ENCODE measurements at regions of chr7 and their contacts with region 1.

Region 1: DNA sequence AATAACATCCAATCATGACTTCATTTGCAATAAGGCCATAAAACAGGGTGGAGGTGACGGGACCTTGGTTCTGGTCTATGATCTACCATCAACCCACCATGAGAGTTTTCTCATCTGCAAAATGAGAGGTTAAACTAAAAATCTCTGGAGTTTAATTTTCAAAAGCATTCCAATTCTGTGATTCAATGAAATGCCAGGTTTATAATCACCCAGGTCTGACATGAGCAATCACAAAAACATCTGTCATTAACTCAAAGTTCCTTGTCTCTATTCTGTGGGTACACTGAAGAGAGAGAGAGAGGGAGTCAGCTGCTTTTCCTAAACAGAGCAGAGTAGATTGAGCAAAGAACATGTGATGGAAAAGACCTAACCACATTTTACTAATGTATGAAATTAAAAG is 75.4 kb downstream of the NUDCD3 start:
- DNase-seq: no peak
- ATAC-seq: no peak
- H3K4me3 ChIP-seq: no peak overlapping the region
- H3K4me3 Mint-ChIP-seq: no peak overlapping the region
- H3K27ac ChIP-seq: no peak overlapping the region
- H3K27ac Mint-ChIP-seq: no peak overlapping the region
- H3K4me1 ChIP-seq: no peaks in the 10 kb centered on the region
- H3K4me1 Mint-ChIP-seq: peaks cover 40% of the 10 kb centered on the region
- H3K27me3 ChIP-seq: no peaks in the 10 kb centered on the region
- H3K27me3 Mint-ChIP-seq: no peaks in the 10 kb centered on the region
- CTCF ChIP-seq: no peak

Region 2: DNA sequence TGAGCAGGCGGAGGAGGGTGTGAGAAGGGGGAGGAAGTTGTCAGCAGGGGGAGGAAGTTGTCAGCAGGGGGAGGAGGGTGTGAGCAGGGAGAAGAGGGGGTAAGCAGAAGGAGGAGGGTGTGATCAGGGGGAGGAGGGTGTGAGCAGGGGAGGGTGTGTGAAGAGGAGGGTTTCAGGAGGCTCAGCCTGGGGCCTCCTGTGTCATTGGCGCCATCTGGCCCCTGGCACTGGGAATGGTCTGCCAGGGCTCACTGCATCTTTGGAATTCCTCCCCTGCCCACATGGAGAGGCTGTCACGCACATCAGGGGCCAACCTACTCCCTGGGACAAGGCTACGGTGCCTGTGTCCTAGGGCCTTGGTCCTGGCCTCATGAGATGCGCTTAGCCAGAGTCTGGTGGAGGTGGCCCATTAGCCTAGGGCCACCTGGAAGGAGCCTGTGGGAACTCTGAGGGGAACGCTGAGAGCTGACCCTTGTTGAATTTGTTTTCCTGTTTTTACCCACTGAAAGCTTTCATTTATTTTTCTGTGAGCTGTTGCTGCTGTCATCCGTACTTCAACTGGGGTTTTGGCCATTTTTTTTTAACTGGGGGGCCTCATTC is 107.6 kb before region 1 on chr7:
- CTCF ChIA-PET with region 1: no interaction called
- POLR2A ChIA-PET with region 1: no interaction called
- intact Hi-C with region 1: no loop called
- DNase-seq: peak in 4 of 9 experiments; percentile 8 to 36 (median 19)
- ATAC-seq: no peak
- H3K4me3 ChIP-seq: no peak overlapping the region
- H3K4me3 Mint-ChIP-seq: no peak overlapping the region
- H3K27ac ChIP-seq: no peak overlapping the region
- H3K27ac Mint-ChIP-seq: no peak overlapping the region
- H3K4me1 ChIP-seq: peaks cover 9% of the 10 kb centered on the region
- H3K4me1 Mint-ChIP-seq: peaks cover 4% of the 10 kb centered on the region
- H3K27me3 ChIP-seq: peaks cover 3 to 4% of the 10 kb centered on the region in 2 experiments
- H3K27me3 Mint-ChIP-seq: peaks cover 8% of the 10 kb centered on the region
- CTCF ChIP-seq: no peak

Region 3: GRCh38 chr7:44460325-44460724 is 45.3 kb after region 1 on chr7:
- CTCF ChIA-PET with region 1: no interaction called
- POLR2A ChIA-PET with region 1: no interaction called
- intact Hi-C with region 1: loop called in 1 of 2 experiments (anchors 10 kb)
- DNase-seq: peak; percentile 13 to 92 (median 62)
- ATAC-seq: peak; percentile 95
- H3K4me3 ChIP-seq: peak overlapping the region in 1 of 2 experiments; percentile 5
- H3K4me3 Mint-ChIP-seq: peak overlapping the region; percentile 33
- H3K27ac ChIP-seq: peak overlapping the region in 1 of 2 experiments; percentile 4
- H3K27ac Mint-ChIP-seq: peak overlapping the region; percentile 68
- H3K4me1 ChIP-seq: peaks cover 58% of the 10 kb centered on the region
- H3K4me1 Mint-ChIP-seq: peaks cover 76% of the 10 kb centered on the region
- H3K27me3 ChIP-seq: no peaks in the 10 kb centered on the region
- H3K27me3 Mint-ChIP-seq: no peaks in the 10 kb centered on the region
- CTCF ChIP-seq: no peak

Measured in CD8-positive, alpha-beta T cell (primary cell).